Activated CD4-positive, alpha-beta T cell treated with anti-CD3 and anti-CD28 coated beads for 36 hours (primary cell): ENCODE measurements at regions of chr14 and their contacts with region 1.

Region 1: GRCh38 chr14:100239840-100240724 is 1.1 kb downstream of the YY1 start:
- DNase-seq: peak; percentile 93
- ATAC-seq: peak; percentile 40
- H3K4me3 Mint-ChIP-seq: peak overlapping the region; percentile 97
- H3K27ac Mint-ChIP-seq: peak overlapping the region; percentile 88
- H3K4me1 Mint-ChIP-seq: peaks cover 54% of the 10 kb centered on the region
- H3K27me3 Mint-ChIP-seq: no peaks in the 10 kb centered on the region

Region 2: DNA sequence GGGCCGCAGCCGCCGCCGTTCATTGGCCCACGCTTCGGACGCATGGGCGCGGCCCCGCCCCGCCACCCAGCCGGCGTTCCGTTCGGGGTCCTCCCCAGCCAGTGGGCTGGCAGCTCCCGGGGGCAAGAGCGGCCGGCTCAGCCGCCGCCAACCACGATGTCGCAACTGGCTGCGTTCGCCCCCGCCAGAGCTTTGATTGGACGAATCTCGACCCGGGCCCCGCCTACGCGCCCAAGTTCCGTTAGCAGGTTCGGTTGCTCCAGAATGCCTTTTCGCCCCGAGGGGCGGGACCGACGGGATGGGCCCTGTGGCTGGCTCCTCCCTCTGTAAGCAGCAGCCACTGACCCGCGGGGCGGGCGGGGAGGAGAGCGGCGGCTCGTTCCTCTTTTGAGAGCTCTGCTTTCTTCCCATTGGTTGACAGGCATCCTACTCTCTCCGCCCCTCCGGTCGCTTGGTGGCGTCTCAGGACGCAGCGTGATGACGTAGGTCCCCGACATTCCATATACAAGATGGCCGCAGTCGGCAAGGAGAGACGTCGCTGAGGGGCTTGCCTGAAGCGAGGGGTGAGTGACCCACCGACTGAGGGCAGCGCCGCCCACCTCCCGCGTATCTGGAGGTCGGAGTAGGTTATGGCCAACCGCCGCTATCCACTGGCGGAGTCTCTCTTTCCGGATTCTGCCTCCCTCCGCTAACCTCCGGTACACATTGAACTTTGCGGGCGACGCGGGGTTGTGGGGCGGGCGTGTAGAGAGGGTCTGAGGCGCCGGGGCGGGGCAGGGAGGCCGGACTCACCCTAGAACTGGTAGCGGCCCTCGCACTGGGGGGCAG is 759.0 kb before region 1 on chr14 and contains the start of gene CCNK:
- CTCF ChIA-PET with region 1: no interaction called
- POLR2A ChIA-PET with region 1: no interaction called
- intact Hi-C with region 1: loop called in 1 of 2 experiments (anchors 1 kb)
- DNase-seq: peak; percentile 100
- ATAC-seq: peak; percentile 95
- H3K4me3 Mint-ChIP-seq: peak within 1 kb of the TSS; percentile 97
- H3K27ac Mint-ChIP-seq: peak within 1 kb of the TSS; percentile 96
- H3K4me1 Mint-ChIP-seq: peaks cover 58% of the 10 kb centered on the region
- H3K27me3 Mint-ChIP-seq: no peaks in the 10 kb centered on the region
- total RNA-seq, gene CCNK: 93.7 to 96.2 TPM

Region 3: GRCh38 chr14:100067971-100068959 is 171.8 kb before region 1 on chr14:
- CTCF ChIA-PET with region 1: interaction called, 3 read pairs
- POLR2A ChIA-PET with region 1: no interaction called
- intact Hi-C with region 1: loop called (anchors 2 to 5 kb)
- DNase-seq: peak; percentile 93
- ATAC-seq: peak; percentile 38
- H3K4me3 Mint-ChIP-seq: peak overlapping the region; percentile 75
- H3K27ac Mint-ChIP-seq: peak overlapping the region; percentile 99
- H3K4me1 Mint-ChIP-seq: peaks cover 64% of the 10 kb centered on the region
- H3K27me3 Mint-ChIP-seq: no peaks in the 10 kb centered on the region

Region 4: DNA sequence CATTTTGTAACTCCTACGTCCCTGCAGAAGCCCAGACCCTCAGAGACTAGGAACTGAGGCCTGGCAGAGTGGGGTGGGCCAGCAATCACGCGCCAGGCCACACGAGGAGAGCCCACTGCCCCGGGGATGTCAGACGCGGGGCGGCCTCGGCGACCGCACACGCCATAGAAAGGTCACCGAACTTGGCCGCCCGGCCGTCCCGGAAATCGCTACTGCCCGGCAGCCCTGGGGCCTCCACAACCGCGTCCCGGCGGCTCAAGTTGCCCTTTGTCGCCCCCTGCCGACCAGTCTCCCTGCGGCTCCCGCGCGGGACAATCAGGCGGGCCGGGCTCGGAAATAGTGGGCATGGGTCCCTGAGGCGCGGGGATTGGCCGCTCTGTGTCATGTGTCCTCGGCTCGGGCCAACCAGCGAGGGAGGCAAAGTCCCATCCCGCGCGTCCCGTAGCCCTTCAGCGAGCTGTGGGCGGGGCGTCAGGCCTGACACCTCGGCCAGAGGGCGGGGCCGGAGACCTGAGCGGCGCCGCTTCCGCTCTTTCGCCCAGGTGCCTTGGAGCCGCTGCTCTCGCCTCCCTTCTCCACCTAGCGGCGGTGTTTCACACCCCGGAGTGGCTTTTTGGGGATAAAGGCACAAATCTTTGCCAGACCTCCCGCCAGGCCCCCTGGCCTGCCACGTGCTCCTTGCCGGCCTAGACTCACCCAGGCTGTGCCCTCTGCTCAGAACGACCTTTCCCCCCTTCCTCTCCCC is 47.2 kb before region 1 on chr14:
- CTCF ChIA-PET with region 1: interaction called, 21 read pairs
- POLR2A ChIA-PET with region 1: interaction called, 4 read pairs
- intact Hi-C with region 1: loop called (anchors 1 kb)
- DNase-seq: peak; percentile 100
- ATAC-seq: peak; percentile 100
- H3K4me3 Mint-ChIP-seq: peak overlapping the region; percentile 70
- H3K27ac Mint-ChIP-seq: peak overlapping the region; percentile 92
- H3K4me1 Mint-ChIP-seq: peaks cover 13% of the 10 kb centered on the region
- H3K27me3 Mint-ChIP-seq: no peaks in the 10 kb centered on the region

Region 5: GRCh38 chr14:100256339-100256895 is 16.3 kb after region 1 on chr14:
- CTCF ChIA-PET with region 1: interaction called, 12 read pairs
- POLR2A ChIA-PET with region 1: interaction called, 4 read pairs
- intact Hi-C with region 1: loop called in 1 of 2 experiments (anchors 1 kb)
- DNase-seq: no peak
- ATAC-seq: no peak
- H3K4me3 Mint-ChIP-seq: no peak overlapping the region
- H3K27ac Mint-ChIP-seq: peak overlapping the region; percentile 44
- H3K4me1 Mint-ChIP-seq: peaks cover 82% of the 10 kb centered on the region
- H3K27me3 Mint-ChIP-seq: no peaks in the 10 kb centered on the region

Region 6: DNA sequence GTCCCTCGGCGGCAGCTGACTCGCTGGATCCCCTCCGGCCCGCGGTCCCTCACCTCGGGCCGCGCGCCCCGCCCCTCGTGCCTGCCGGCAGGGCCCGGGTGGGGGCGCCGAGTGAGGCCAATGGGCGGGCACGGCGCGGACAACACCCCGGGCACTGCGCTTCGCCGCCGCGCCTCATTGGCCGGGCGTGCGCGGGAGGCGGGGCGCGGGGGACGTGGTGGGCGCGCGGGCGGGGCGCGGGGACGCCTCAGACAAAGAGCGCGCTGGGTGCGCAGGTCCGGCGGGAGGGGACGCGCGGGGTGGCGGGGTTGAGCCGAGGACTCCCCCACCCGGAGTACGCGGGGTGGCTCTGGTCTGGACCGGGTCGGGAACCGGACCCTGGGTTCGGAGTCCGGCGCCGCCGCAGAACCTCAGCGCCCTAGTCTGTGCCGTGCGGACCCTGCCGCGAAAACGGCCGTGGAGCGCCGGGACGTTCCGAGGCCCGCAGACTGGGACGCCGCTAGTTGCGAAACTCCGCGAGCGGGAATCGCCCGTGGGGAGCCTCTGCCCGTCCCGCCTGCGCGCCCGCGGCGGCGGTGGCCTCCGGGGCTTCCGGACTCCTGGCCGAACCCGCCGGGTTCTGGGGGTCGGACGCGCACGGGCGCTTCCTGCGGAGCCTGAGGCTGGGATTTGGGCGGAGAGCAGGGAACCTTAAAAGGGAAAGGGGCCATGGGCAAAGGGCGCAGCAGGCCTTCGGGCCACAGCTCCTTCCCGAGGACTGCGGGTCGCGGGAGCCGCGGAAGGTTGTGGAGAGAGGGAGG is 66.5 kb after region 1 on chr14 and contains the start of gene SLC25A29:
- CTCF ChIA-PET with region 1: no interaction called
- POLR2A ChIA-PET with region 1: no interaction called
- intact Hi-C with region 1: loop called in 1 of 2 experiments (anchors 2 kb)
- DNase-seq: peak; percentile 80
- ATAC-seq: peak; percentile 90
- H3K4me3 Mint-ChIP-seq: peak within 1 kb of the TSS; percentile 63
- H3K27ac Mint-ChIP-seq: no peak within 1 kb of the TSS
- H3K4me1 Mint-ChIP-seq: peaks cover 7% of the 10 kb centered on the region
- H3K27me3 Mint-ChIP-seq: peaks cover 14% of the 10 kb centered on the region
- total RNA-seq, gene SLC25A29: 5.4 to 5.8 TPM

Region 7: GRCh38 chr14:102086972-102087761 is 1847.1 kb after region 1 on chr14 and contains the start of gene HSP90AA1:
- CTCF ChIA-PET with region 1: no interaction called
- POLR2A ChIA-PET with region 1: no interaction called
- intact Hi-C with region 1: loop called in 1 of 2 experiments (anchors 2 kb)
- DNase-seq: peak; percentile 97
- ATAC-seq: peak; percentile 68
- H3K4me3 Mint-ChIP-seq: peak within 1 kb of the TSS; percentile 77
- H3K27ac Mint-ChIP-seq: peak within 1 kb of the TSS; percentile 92
- H3K4me1 Mint-ChIP-seq: peaks cover 46% of the 10 kb centered on the region
- H3K27me3 Mint-ChIP-seq: no peaks in the 10 kb centered on the region
- total RNA-seq, gene HSP90AA1: 1,344 to 1,372 TPM